PC-9 (cell line): ENCODE measurements at regions of chr3 and their contacts with region 1.

Region 1: DNA sequence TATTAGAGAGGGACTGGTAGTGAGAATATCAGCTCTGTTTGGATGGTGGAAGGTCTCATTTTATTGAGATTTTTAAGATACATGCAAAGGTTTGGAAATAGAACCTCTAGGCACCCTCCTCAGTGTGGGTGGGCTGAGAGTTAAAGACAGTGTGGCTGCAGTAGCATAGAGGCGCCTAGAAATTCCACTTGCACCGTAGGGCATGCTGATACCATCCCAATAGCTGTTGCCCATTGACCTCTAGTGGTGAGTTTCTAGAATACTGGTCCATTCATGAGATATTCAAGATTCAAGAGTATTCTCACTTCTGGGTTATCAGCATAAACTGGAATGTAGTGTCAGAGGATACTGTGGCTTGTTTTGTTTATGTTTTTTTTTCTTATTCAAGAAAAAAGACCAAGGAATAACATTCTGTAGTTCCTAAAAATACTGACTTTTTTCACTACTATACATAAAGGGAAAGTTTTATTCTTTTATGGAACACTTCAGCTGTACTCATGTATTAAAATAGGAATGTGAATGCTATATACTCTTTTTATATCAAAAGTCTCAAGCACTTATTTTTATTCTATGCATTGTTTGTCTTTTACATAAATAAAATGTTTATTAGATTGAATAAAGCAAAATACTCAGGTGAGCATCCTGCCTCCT is 87.2 kb downstream of the TGFBR2 start:
- DNase-seq: peak; percentile 35 to 49
- H3K4me3 ChIP-seq: no peak overlapping the region
- H3K27ac ChIP-seq: no peak overlapping the region
- H3K4me1 ChIP-seq: peaks cover 15% of the 10 kb centered on the region
- H3K27me3 ChIP-seq: no peaks in the 10 kb centered on the region
- CTCF ChIP-seq: peak; percentile 76

Region 2: DNA sequence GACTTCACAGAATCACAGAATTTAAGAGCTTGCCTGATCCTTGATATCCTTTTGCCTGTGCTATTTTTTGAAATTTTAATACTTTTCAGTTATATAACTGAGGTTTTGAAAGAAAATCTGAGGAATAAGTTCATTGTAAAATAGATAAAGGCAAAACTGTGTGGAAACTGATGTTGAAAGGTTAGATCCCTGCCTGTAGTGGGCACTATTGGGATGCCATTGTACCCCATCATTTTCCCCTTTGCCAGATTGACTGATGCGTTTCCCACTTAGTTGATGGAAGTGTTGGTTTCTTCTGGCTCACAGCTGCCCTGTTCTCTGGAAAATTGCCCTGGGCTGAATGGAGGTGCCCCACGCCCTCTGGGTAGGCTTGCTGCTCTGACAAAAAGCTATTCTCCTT is 1024.9 kb before region 1 on chr3:
- CTCF ChIA-PET with region 1: no interaction called
- POLR2A ChIA-PET with region 1: no interaction called
- intact Hi-C with region 1: no loop called
- DNase-seq: no peak
- H3K4me3 ChIP-seq: no peak overlapping the region
- H3K27ac ChIP-seq: no peak overlapping the region
- H3K4me1 ChIP-seq: no peaks in the 10 kb centered on the region
- H3K27me3 ChIP-seq: no peaks in the 10 kb centered on the region
- CTCF ChIP-seq: no peak

Region 3: GRCh38 chr3:30012941-30013543 is 680.6 kb before region 1 on chr3:
- CTCF ChIA-PET with region 1: no interaction called
- POLR2A ChIA-PET with region 1: no interaction called
- intact Hi-C with region 1: loop called (anchors 1 kb)
- DNase-seq: peak in 1 of 2 experiments; percentile 55
- H3K4me3 ChIP-seq: no peak overlapping the region
- H3K27ac ChIP-seq: no peak overlapping the region
- H3K4me1 ChIP-seq: no peaks in the 10 kb centered on the region
- H3K27me3 ChIP-seq: no peaks in the 10 kb centered on the region
- CTCF ChIP-seq: peak; percentile 69

Region 4: DNA sequence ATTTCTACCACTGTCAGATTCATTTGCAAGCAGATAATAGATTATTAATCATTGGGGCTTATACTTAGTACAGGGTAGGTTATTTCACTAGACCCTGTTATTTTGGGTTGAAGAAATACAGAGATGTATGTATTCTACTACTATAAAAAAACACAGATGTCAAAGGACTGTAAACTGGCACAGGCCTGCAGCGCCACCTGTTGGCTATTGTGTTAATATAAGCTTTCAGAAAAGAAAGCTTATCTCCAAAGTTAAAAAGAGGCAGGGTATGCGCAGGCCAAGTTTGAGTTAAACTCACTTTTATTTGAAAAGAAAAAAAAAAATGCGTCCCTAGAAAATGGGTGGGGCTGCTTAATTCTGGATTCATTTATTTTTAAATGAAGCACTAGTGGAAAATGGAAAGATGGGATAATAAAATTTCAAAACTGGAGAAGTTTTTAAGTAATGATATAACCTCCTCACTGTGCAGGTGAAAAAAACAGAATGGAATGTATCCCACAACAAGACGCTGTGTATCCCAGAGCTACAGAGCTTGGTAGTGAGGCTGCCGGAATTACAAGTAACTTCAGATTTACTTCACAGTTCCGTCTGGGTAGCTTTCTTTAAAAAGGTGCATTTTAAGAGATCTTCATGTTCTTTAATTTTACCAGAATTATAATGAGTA is 494.4 kb before region 1 on chr3:
- CTCF ChIA-PET with region 1: interaction called, 9 read pairs
- POLR2A ChIA-PET with region 1: no interaction called
- intact Hi-C with region 1: loop called (anchors 5 kb)
- DNase-seq: peak in 1 of 2 experiments; percentile 30
- H3K4me3 ChIP-seq: no peak overlapping the region
- H3K27ac ChIP-seq: no peak overlapping the region
- H3K4me1 ChIP-seq: no peaks in the 10 kb centered on the region
- H3K27me3 ChIP-seq: no peaks in the 10 kb centered on the region
- CTCF ChIP-seq: peak; percentile 78

Region 5: DNA sequence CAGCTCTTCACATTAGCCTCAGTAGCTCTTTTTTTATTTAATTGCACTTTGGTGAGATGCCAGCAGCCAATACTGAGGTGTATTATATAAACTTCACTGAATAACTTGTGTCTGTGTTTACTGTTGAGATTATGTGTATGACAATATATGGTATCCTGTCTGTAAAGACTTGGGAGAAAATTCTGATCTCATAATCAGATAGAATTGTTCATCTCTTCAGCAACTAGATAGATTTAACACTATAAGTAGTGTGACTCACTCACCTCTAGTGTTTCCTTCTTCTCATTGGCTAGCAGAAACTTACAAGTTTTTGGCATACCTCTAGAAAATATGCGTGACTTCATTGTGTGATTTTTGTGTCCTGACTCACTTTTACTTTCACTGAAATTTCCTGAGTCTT is 154.8 kb before region 1 on chr3:
- CTCF ChIA-PET with region 1: interaction called, 5 read pairs
- POLR2A ChIA-PET with region 1: no interaction called
- intact Hi-C with region 1: loop called (anchors 2 kb)
- DNase-seq: peak; percentile 20 to 93
- H3K4me3 ChIP-seq: peak overlapping the region; percentile 46; the same call in 1 of the 2 replicates
- H3K27ac ChIP-seq: peak overlapping the region; percentile 97
- H3K4me1 ChIP-seq: peaks cover 22% of the 10 kb centered on the region
- H3K27me3 ChIP-seq: no peaks in the 10 kb centered on the region
- CTCF ChIP-seq: no peak

Region 6: GRCh38 chr3:30625541-30626435 is 67.8 kb before region 1 on chr3:
- CTCF ChIA-PET with region 1: no interaction called
- POLR2A ChIA-PET with region 1: no interaction called
- intact Hi-C with region 1: loop called (anchors 2 kb)
- DNase-seq: peak; percentile 43 to 87
- H3K4me3 ChIP-seq: no peak overlapping the region
- H3K27ac ChIP-seq: peak overlapping the region; percentile 77
- H3K4me1 ChIP-seq: peaks cover 27% of the 10 kb centered on the region
- H3K27me3 ChIP-seq: no peaks in the 10 kb centered on the region
- CTCF ChIP-seq: no peak

Region 7: GRCh38 chr3:30886888-30887287 is 193.3 kb after region 1 on chr3:
- CTCF ChIA-PET with region 1: no interaction called
- POLR2A ChIA-PET with region 1: no interaction called
- intact Hi-C with region 1: no loop called
- DNase-seq: no peak
- H3K4me3 ChIP-seq: no peak overlapping the region
- H3K27ac ChIP-seq: no peak overlapping the region
- H3K4me1 ChIP-seq: no peaks in the 10 kb centered on the region
- H3K27me3 ChIP-seq: no peaks in the 10 kb centered on the region
- CTCF ChIP-seq: no peak

Region 8: DNA sequence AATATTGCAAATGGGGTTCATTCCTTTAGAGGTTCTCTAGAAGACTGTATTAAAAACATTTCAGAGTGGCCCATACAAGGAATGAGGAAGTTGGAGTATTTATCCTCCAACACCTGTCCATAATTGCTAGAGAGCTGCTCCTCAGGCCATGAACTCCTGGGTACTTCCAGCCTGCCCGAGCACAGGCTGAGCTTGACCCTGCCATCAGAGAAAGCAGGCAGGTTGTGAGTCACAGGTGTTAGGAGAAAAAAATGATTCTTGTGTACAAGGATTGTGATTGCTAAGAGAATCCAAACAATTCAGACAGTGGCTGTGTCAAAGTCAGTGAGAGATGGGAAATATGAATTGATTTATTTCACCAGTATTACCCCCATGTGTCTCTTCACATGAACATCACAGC is 357.6 kb after region 1 on chr3:
- CTCF ChIA-PET with region 1: no interaction called
- POLR2A ChIA-PET with region 1: interaction called, 12 read pairs
- intact Hi-C with region 1: no loop called
- DNase-seq: peak; percentile 61 to 79
- H3K4me3 ChIP-seq: no peak overlapping the region
- H3K27ac ChIP-seq: no peak overlapping the region
- H3K4me1 ChIP-seq: no peaks in the 10 kb centered on the region
- H3K27me3 ChIP-seq: no peaks in the 10 kb centered on the region
- CTCF ChIP-seq: no peak